Naive thymus-derived CD8-positive, alpha-beta T cell (primary cell): ENCODE measurements at regions of chr14 and their contacts with region 1.

Region 1: GRCh38 chr14:73591690-73592448 is at the start of gene ACOT4:
- DNase-seq: peak; percentile 21 to 71 (median 55)
- ATAC-seq: peak; percentile 87 to 88
- H3K4me3 Mint-ChIP-seq: peak within 1 kb of the TSS; percentile 68 to 88 (median 78)
- H3K27ac Mint-ChIP-seq: peak within 1 kb of the TSS in 9 of 10 donors; percentile 48 to 89 (median 65)
- H3K4me1 Mint-ChIP-seq: peaks cover 5 to 25% (median 7%) of the 10 kb centered on the region in 4 donors
- H3K27me3 Mint-ChIP-seq: no peaks in the 10 kb centered on the region
- polyA plus RNA-seq, gene ACOT4: 1.9 to 4.0 (median 2.7) TPM

Region 2: DNA sequence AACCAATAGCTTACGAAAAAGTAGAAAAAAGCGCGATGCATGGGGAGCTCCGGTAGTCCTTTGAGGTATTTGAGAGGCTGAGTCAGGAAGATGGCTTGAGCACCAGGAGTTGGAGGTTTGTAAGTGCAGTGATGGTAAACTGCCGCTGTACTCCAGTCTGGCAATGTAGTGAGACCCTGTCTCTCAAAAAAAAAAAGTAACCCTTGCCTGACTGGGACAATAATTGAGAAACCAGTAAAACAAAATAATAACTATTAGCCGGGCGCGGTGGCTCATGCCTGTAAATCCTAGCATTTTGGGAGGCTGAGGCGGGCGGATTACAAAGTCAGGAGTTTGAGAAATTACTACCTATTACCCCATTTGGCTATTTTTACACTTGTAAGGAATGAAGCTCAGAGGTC is 23.5 kb before region 1 on chr14:
- POLR2A ChIA-PET with region 1: interaction called, 19 read pairs
- DNase-seq: peak in 2 of 10 donors; percentile 4 to 18
- ATAC-seq: peak in 1 of 2 donors; percentile 7
- H3K4me3 Mint-ChIP-seq: peak overlapping the region; percentile 79 to 98 (median 95)
- H3K27ac Mint-ChIP-seq: peak overlapping the region; percentile 87 to 99 (median 98)
- H3K4me1 Mint-ChIP-seq: peaks cover 25 to 52% (median 45%) of the 10 kb centered on the region in 4 donors
- H3K27me3 Mint-ChIP-seq: no peaks in the 10 kb centered on the region

Region 3: DNA sequence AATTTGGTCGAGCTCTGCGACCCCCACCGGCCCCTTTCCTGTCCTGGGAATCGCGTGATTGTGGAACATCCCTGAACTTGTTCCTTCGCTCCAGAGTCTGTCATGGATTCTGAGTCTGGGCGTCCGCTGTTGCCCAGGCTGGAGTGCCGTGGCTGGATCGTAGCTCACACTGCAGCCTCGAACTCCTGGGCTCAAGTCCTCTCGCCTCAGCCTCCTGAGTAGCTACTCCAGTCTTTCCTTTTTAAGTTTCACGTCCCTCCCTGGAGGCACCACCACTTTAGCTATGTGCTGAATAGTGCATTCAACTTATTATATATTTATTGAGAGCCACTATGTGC is 21.1 kb after region 1 on chr14:
- POLR2A ChIA-PET with region 1: interaction called, 40 read pairs
- DNase-seq: no peak
- ATAC-seq: peak in 1 of 2 donors; percentile 15
- H3K4me3 Mint-ChIP-seq: peak overlapping the region; percentile 81 to 92 (median 86)
- H3K27ac Mint-ChIP-seq: peak overlapping the region; percentile 68 to 94 (median 88)
- H3K4me1 Mint-ChIP-seq: peaks cover 0 to 5% (median 2%) of the 10 kb centered on the region in 4 donors
- H3K27me3 Mint-ChIP-seq: peaks cover 0 to 2% (median 0%) of the 10 kb centered on the region in 5 donors

Region 4: GRCh38 chr14:73685328-73685727 is 93.5 kb after region 1 on chr14:
- POLR2A ChIA-PET with region 1: no interaction called
- DNase-seq: no peak
- ATAC-seq: no peak
- H3K4me3 Mint-ChIP-seq: no peak overlapping the region
- H3K27ac Mint-ChIP-seq: peak overlapping the region in 1 of 10 donors; percentile 28
- H3K4me1 Mint-ChIP-seq: no peaks in the 10 kb centered on the region
- H3K27me3 Mint-ChIP-seq: no peaks in the 10 kb centered on the region